Activated CD8-positive, alpha-beta T cell treated with anti-CD3 and anti-CD28 coated beads, Interleukin-2, amount 10 ng/mL, durations not matched to agents 7 days and 5 days (primary cell): ENCODE measurements at regions of chr6 and their contacts with region 1.

Region 1: GRCh38 chr6:170516783-170517616 is 36.1 kb downstream of the PSMB1 start:
- DNase-seq: peak; percentile 59
- ATAC-seq: peak; percentile 90
- H3K4me3 Mint-ChIP-seq: no peak overlapping the region
- H3K27ac Mint-ChIP-seq: no peak overlapping the region
- H3K4me1 Mint-ChIP-seq: peaks cover 8% of the 10 kb centered on the region
- H3K27me3 Mint-ChIP-seq: peaks cover 64% of the 10 kb centered on the region

Region 2: DNA sequence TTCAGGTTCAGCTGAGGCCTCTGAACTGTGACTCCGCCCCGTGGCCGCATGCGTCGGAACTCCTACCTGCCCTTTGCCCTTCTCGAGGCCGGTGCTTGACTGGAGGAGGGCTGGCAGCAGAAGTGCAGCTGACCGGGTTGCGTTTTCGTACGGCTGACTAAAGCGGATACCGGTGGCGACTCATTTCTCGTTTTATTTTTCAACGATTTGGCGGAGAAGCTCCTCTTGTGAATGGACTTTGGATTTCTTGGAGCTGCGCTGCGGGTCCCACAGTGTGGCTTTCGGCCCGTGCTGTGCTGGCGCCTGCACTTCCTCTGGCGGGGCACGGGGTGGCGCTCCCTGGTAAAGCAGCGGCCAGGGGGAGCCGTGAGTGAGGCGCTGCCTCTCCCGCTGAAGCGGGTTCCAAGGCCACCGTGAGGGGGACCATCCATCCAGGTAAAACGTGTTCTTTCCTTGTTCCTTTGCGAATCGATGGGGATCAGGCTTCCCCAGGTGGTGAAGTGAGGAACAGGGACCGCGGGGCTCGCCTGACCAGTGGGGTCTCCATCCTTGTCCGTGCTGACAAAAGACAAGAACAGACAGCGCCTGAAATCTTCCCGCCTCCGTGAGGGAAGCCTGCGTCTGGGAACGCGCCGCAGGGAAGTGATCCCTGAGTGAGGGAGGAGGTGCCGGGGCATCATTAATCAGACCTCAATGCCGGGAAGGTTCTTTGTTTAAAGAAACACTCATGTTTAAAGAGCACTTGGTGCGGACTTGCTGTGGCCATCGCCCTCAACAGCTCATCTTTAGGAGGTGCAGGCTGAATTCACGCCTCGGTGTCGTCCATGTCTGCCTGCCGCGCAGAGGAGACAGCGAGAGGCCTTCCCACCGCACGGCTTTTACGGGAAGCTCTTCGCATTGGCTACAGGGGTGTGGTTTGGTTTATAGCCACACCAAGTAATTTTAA is 726.7 kb before region 1 on chr6:
- CTCF ChIA-PET with region 1: interaction called, 23 read pairs
- POLR2A ChIA-PET with region 1: no interaction called
- DNase-seq: peak; percentile 76
- ATAC-seq: peak; percentile 97
- H3K4me3 Mint-ChIP-seq: peak overlapping the region; percentile 67
- H3K27ac Mint-ChIP-seq: no peak overlapping the region
- H3K4me1 Mint-ChIP-seq: peaks cover 14% of the 10 kb centered on the region
- H3K27me3 Mint-ChIP-seq: peaks cover 54% of the 10 kb centered on the region

Region 3: DNA sequence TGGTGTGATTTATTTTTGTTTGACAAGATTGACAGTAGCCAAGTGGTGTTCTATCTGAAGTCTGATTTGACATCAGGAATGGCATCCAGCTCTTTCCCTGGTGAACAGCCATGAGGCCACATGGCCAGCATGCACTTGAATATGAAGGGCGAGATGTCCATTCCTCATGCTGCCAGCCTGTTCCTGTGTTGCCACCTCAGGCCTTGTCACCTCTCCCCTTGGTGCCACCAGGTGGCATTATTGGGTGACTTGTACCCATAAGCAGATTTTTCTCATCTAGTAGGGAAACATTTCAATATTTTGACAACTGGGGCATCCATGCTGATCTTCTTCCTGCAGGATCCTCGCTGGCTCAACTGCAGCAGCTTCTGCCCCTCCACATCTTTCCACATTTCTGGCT is 566.4 kb before region 1 on chr6:
- CTCF ChIA-PET with region 1: interaction called, 19 read pairs
- POLR2A ChIA-PET with region 1: no interaction called
- DNase-seq: peak; percentile 56
- ATAC-seq: peak; percentile 69
- H3K4me3 Mint-ChIP-seq: no peak overlapping the region
- H3K27ac Mint-ChIP-seq: no peak overlapping the region
- H3K4me1 Mint-ChIP-seq: peaks cover 14% of the 10 kb centered on the region
- H3K27me3 Mint-ChIP-seq: peaks cover 15% of the 10 kb centered on the region

Region 4: GRCh38 chr6:170459451-170459850 is 57.5 kb before region 1 on chr6:
- CTCF ChIA-PET with region 1: no interaction called
- POLR2A ChIA-PET with region 1: no interaction called
- DNase-seq: peak; percentile 78
- ATAC-seq: peak; percentile 83
- H3K4me3 Mint-ChIP-seq: peak overlapping the region; percentile 64
- H3K27ac Mint-ChIP-seq: peak overlapping the region; percentile 80
- H3K4me1 Mint-ChIP-seq: peaks cover 54% of the 10 kb centered on the region
- H3K27me3 Mint-ChIP-seq: no peaks in the 10 kb centered on the region

Region 5: DNA sequence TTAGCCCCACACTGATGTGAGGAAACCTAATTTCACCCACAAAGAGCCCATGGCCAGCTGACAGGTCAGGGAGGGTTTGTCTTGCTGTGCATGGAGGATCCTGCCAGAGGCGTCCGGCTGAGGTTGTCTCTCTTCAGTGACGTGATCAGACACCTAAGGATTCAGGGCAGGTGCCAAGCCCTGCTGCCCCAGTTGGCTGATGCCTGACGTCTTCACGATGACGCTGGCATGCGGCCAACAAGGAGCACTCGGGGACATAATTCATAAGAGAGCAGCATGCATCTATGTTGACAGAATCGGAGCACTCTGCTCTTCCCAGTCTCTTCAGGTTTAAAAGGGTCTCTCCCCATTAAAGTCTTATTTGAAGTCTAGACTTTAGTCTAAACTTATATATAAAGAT is 11.7 kb before region 1 on chr6:
- CTCF ChIA-PET with region 1: interaction called, 13 read pairs
- POLR2A ChIA-PET with region 1: no interaction called
- DNase-seq: no peak
- ATAC-seq: no peak
- H3K4me3 Mint-ChIP-seq: no peak overlapping the region
- H3K27ac Mint-ChIP-seq: no peak overlapping the region
- H3K4me1 Mint-ChIP-seq: peaks cover 6% of the 10 kb centered on the region
- H3K27me3 Mint-ChIP-seq: peaks cover 42% of the 10 kb centered on the region

Region 6: GRCh38 chr6:170529839-170530469 is 13.0 kb after region 1 on chr6:
- CTCF ChIA-PET with region 1: interaction called, 20 read pairs
- POLR2A ChIA-PET with region 1: interaction called, 3 read pairs
- DNase-seq: peak; percentile 80
- ATAC-seq: peak; percentile 76
- H3K4me3 Mint-ChIP-seq: no peak overlapping the region
- H3K27ac Mint-ChIP-seq: no peak overlapping the region
- H3K4me1 Mint-ChIP-seq: peaks cover 12% of the 10 kb centered on the region
- H3K27me3 Mint-ChIP-seq: peaks cover 14% of the 10 kb centered on the region